Esophagus muscularis mucosa (tissue), 4 donors: ENCODE measurements at regions of chr6 and their contacts with region 1.

Region 1: GRCh38 chr6:129575378-129576118 is 134.4 kb downstream of the ARHGAP18 start:
- DNase-seq: no peak
- H3K4me3 ChIP-seq: peak overlapping the region; percentile 26 to 52 (median 36)
- H3K27ac ChIP-seq: no peak overlapping the region
- H3K4me1 ChIP-seq: peaks cover 0 to 8% (median 0%) of the 10 kb centered on the region in 4 donors
- H3K27me3 ChIP-seq: no peaks in the 10 kb centered on the region
- CTCF ChIP-seq: peak; percentile 53 to 67 (median 60)
- EP300 ChIP-seq: no peak
- POLR2A ChIP-seq: no peak

Region 2: DNA sequence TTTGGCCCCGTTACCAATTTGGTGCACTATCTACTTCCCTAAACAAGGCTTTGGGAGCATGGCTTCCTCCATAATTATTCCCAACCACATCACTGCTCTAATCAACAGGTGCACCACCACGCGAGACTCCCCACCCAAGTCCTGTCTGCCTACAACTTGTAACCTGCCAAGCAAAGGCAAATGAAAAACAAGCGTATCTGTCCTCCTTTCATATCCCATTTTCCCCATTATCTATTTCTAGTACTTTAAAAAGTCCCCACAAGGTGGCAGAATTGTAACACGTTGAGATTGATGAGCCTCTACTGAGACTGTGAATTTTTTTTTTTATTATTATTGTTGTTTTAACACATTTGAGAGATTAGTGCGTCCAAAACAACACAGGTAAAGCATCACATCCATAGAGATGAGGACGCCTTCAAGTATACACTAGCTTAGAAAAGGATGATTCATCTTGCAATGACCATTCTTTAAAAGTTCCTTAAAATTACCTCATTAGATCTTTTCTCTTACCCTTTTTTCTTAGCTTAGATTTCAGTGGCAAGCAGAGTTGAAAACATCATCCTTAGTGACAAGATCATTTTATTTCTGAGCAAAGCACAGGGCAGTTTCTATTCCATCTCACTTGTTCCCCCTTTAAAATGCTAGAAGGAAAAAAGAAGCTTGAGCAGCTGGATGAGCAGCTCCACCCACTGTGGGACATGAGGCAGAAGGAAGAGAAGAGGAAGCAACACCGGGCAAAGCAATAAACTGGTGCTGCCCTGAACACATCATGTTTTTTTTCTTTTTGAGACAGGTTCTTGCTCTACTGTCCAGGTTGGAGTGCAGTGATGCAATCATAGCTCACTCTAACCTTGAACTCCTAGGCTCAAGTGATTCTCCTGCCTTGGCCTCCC is 76.4 kb before region 1 on chr6:
- intact Hi-C with region 1: loop called (anchors 5 kb)
- DNase-seq: no peak
- H3K4me3 ChIP-seq: no peak overlapping the region
- H3K27ac ChIP-seq: peak overlapping the region in 1 of 4 donors; percentile 9
- H3K4me1 ChIP-seq: peaks cover 5 to 25% (median 14%) of the 10 kb centered on the region in 4 donors
- H3K27me3 ChIP-seq: no peaks in the 10 kb centered on the region
- CTCF ChIP-seq: peak; percentile 45 to 61 (median 57)
- EP300 ChIP-seq: no peak
- POLR2A ChIP-seq: no peak